CD8-positive, alpha-beta memory T cell (primary cell): ENCODE measurements at regions of chr6 and their contacts with region 1.

Region 1: DNA sequence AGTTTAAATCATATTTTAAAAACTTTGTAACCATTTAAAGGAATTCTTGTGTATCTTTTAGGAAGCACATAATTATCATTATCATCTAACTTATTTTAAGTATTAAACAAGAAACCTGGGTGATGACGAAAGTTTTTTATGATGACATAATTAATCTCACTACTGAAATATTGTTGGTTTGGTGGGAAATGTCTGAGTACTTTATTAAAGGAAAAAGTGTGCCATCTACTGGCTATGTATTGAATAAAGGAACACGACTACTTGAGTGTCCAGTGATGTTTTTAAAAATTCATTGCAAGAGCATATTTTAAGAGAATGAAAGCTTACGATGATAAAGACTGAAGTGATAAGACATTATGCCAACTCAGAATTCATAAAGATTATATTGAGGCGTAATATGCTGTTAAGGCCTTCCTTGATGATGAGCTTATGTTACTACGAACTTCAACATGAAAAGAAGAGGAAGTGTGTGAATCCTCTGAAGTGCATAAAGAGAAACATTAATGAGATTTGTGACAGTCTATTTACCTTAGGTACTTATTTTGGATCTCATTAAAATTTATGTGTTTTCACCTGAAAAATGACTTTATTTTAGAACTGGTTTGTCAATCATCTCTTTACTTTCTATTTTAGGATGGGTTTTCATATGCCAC is 12.0 kb upstream of the TRMT11 start:
- DNase-seq: peak in 2 of 5 donors; percentile 28 to 40
- H3K4me3 ChIP-seq: no peak overlapping the region
- H3K4me3 Mint-ChIP-seq: no peak overlapping the region
- H3K27ac ChIP-seq: no peak overlapping the region
- H3K27ac Mint-ChIP-seq: peak overlapping the region in 1 of 8 donors; percentile 26
- H3K4me1 ChIP-seq: no peaks in the 10 kb centered on the region
- H3K4me1 Mint-ChIP-seq: peaks cover 9 to 15% (median 12%) of the 10 kb centered on the region in 3 donors
- H3K27me3 ChIP-seq: no peaks in the 10 kb centered on the region
- H3K27me3 Mint-ChIP-seq: no peaks in the 10 kb centered on the region

Region 2: GRCh38 chr6:125986300-125987025 is 12.1 kb after region 1 on chr6 and contains the start of gene TRMT11:
- CTCF ChIA-PET with region 1: interaction called, 15 read pairs
- POLR2A ChIA-PET with region 1: interaction called, 8 read pairs
- DNase-seq: peak; percentile 72 to 91 (median 82)
- H3K4me3 ChIP-seq: peak within 1 kb of the TSS; percentile 92
- H3K4me3 Mint-ChIP-seq: peak within 1 kb of the TSS in 6 of 7 donors; percentile 5 to 54 (median 33)
- H3K27ac ChIP-seq: peak within 1 kb of the TSS; percentile 87
- H3K27ac Mint-ChIP-seq: peak within 1 kb of the TSS in 1 of 8 donors; percentile 5
- H3K4me1 ChIP-seq: peaks cover 34% of the 10 kb centered on the region
- H3K4me1 Mint-ChIP-seq: peaks cover 9 to 15% (median 13%) of the 10 kb centered on the region in 3 donors
- H3K27me3 ChIP-seq: no peaks in the 10 kb centered on the region
- H3K27me3 Mint-ChIP-seq: no peaks in the 10 kb centered on the region
- total RNA-seq, gene TRMT11: 35.8 to 37.9 TPM

Region 3: DNA sequence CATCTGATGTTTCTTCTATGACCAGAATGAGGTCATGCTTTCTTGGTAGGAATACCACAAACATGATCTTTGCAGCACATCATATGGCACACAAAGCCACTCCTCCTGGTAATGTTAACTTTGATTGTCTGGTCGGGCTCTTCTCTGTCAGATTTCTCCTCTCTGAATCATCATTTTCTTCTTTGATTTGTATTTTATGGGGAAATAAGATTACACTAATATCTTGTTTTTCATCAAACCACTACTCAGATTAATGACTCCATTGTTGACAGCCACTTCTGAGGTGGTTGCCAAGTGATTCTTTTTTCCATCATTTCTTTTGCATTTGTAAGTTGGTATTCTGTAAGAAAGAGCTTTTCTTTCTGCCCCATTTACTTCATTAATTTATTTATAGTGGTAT is 41.5 kb after region 1 on chr6:
- CTCF ChIA-PET with region 1: no interaction called
- POLR2A ChIA-PET with region 1: no interaction called
- DNase-seq: no peak
- H3K4me3 ChIP-seq: no peak overlapping the region
- H3K4me3 Mint-ChIP-seq: no peak overlapping the region
- H3K27ac ChIP-seq: no peak overlapping the region
- H3K27ac Mint-ChIP-seq: no peak overlapping the region
- H3K4me1 ChIP-seq: no peaks in the 10 kb centered on the region
- H3K4me1 Mint-ChIP-seq: no peaks in the 10 kb centered on the region
- H3K27me3 ChIP-seq: no peaks in the 10 kb centered on the region
- H3K27me3 Mint-ChIP-seq: no peaks in the 10 kb centered on the region